ENCODE measurements at regions of chr5 and their contacts with region 1.

Region 1: DNA sequence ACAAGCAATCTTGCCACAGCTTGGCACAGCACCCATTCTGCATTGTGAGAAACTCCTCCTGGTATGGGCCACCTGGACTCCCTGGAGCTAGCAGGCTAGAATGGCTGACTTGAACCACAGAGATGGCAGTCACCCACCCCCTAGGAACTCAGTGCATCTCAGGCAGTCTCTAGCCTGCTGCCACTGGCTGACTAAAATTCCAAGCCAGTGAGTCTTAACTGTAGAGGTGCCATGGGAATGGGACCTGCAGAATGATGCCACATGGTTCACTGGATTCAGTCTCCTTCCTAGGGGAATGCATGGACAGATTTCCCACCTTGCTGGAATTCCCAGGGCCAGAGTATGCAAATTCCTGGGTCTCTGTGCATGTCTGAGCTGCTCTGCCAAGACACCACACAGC is 382.9 kb downstream of the MAN2A1 start:
- DNase-seq: no peak
- ATAC-seq: no peak
- H3K4me3 ChIP-seq: no peak overlapping the region
- H3K4me3 Mint-ChIP-seq: no peak overlapping the region
- H3K27ac ChIP-seq: no peak overlapping the region
- H3K27ac Mint-ChIP-seq: no peak overlapping the region
- H3K4me1 ChIP-seq: no peaks in the 10 kb centered on the region
- H3K4me1 Mint-ChIP-seq: no peaks in the 10 kb centered on the region
- H3K27me3 ChIP-seq: no peaks in the 10 kb centered on the region
- H3K27me3 Mint-ChIP-seq: peaks cover 10 to 18% of the 10 kb centered on the region in 2 donors
- CTCF ChIP-seq: no peak

Region 2: GRCh38 chr5:108858959-108859358 is 1213.7 kb before region 1 on chr5:
- intact Hi-C with region 1: loop called (anchors 10 kb)
- DNase-seq: no peak
- ATAC-seq: no peak
- H3K4me3 ChIP-seq: no peak overlapping the region
- H3K4me3 Mint-ChIP-seq: no peak overlapping the region
- H3K27ac ChIP-seq: no peak overlapping the region
- H3K27ac Mint-ChIP-seq: no peak overlapping the region
- H3K4me1 ChIP-seq: no peaks in the 10 kb centered on the region
- H3K4me1 Mint-ChIP-seq: peaks cover 0 to 6% of the 10 kb centered on the region in 2 donors
- H3K27me3 ChIP-seq: no peaks in the 10 kb centered on the region
- H3K27me3 Mint-ChIP-seq: no peaks in the 10 kb centered on the region
- CTCF ChIP-seq: no peak

Region 3: DNA sequence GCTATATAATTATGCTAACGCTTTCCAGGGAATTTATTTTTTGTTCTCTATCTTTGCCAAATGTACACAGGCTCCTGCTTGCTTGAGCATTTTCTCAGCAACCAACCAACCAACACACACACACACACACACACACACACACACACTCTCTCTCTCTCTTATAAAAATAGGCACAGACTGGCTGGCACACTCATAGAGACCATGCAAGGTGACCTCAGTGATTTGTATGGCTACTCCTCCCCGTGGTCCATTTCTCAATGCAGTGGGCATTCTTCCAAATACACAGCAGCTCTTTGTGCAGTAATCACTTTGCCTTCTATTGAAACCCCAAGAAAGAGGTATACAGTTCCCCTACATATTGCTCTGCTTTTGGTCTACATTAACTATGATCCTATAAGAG is 33.0 kb after region 1 on chr5:
- intact Hi-C with region 1: no loop called
- DNase-seq: no peak
- ATAC-seq: no peak
- H3K4me3 ChIP-seq: no peak overlapping the region
- H3K4me3 Mint-ChIP-seq: no peak overlapping the region
- H3K27ac ChIP-seq: no peak overlapping the region
- H3K27ac Mint-ChIP-seq: no peak overlapping the region
- H3K4me1 ChIP-seq: peaks cover 3% of the 10 kb centered on the region
- H3K4me1 Mint-ChIP-seq: peaks cover 13 to 21% of the 10 kb centered on the region in 2 donors
- H3K27me3 ChIP-seq: no peaks in the 10 kb centered on the region
- H3K27me3 Mint-ChIP-seq: no peaks in the 10 kb centered on the region
- CTCF ChIP-seq: no peak

Region 4: GRCh38 chr5:110150199-110150598 is 77.6 kb after region 1 on chr5:
- intact Hi-C with region 1: no loop called
- DNase-seq: no peak
- ATAC-seq: no peak
- H3K4me3 ChIP-seq: no peak overlapping the region
- H3K4me3 Mint-ChIP-seq: no peak overlapping the region
- H3K27ac ChIP-seq: no peak overlapping the region
- H3K27ac Mint-ChIP-seq: no peak overlapping the region
- H3K4me1 ChIP-seq: no peaks in the 10 kb centered on the region
- H3K4me1 Mint-ChIP-seq: no peaks in the 10 kb centered on the region
- H3K27me3 ChIP-seq: no peaks in the 10 kb centered on the region
- H3K27me3 Mint-ChIP-seq: peaks cover 0 to 3% of the 10 kb centered on the region in 2 donors
- CTCF ChIP-seq: no peak

Measured in natural killer cell (primary cell).